ENCODE measurements at regions of chrX and their contacts with region 1.

Region 1: GRCh38 chrX:14029425-14030173 is at the start of gene GEMIN8:
- DNase-seq: peak; percentile 85 to 92 (median 90)
- ATAC-seq: peak; percentile 94 to 99 (median 98)
- H3K4me3 ChIP-seq: peak within 1 kb of the TSS; percentile 34 to 97 (median 70)
- H3K27ac ChIP-seq: peak within 1 kb of the TSS; percentile 40 to 89 (median 84)
- H3K4me1 ChIP-seq: peaks cover 0 to 30% (median 13%) of the 10 kb centered on the region in 12 donors
- H3K27me3 ChIP-seq: peaks cover 0 to 24% (median 0%) of the 10 kb centered on the region in 9 donors
- CTCF ChIP-seq: no peak
- POLR2A ChIP-seq: peak in 1 of 2 donors; percentile 53
- total RNA-seq, gene GEMIN8: 10.3 to 16.3 (median 13.5) TPM

Region 2: DNA sequence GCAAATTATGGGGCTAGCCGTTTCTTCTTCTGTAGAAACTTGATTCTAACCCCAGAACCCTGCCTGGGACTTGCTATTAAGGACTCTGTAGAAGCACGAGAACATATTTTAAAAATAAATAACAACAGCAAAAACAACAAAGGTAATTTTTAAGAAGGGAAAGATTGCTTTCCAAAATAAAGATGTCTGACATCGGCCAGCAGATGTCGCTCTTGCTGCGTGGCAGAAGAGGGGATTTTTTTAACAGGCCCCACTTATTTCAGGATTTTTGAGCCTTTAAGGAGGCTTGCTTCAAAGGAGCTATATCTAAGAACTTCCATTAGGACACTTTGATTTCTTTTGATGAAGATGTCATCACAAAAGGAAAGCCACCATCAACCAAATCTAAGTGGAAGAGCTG is 523.0 kb before region 1 on chrX:
- intact Hi-C with region 1: loop called in 9 of 10 experiments (anchors 2 to 5 kb)
- DNase-seq: peak in 4 of 5 donors; percentile 13 to 61 (median 28)
- ATAC-seq: no peak
- H3K4me3 ChIP-seq: no peak overlapping the region
- H3K27ac ChIP-seq: no peak overlapping the region
- H3K4me1 ChIP-seq: no peaks in the 10 kb centered on the region
- H3K27me3 ChIP-seq: peaks cover 0 to 34% (median 0%) of the 10 kb centered on the region in 9 donors
- CTCF ChIP-seq: peak; percentile 63 to 83 (median 74)
- POLR2A ChIP-seq: no peak

Region 3: GRCh38 chrX:13653022-13653693 is 376.4 kb before region 1 on chrX and contains the start of gene TCEANC:
- intact Hi-C with region 1: loop called in 9 of 10 experiments (anchors 2 to 5 kb)
- DNase-seq: peak; percentile 94 to 98 (median 97)
- ATAC-seq: peak; percentile 99 to 100 (median 100)
- H3K4me3 ChIP-seq: peak within 1 kb of the TSS; percentile 29 to 81 (median 64)
- H3K27ac ChIP-seq: peak within 1 kb of the TSS; percentile 73 to 98 (median 94)
- H3K4me1 ChIP-seq: peaks cover 0 to 18% (median 7%) of the 10 kb centered on the region in 12 donors
- H3K27me3 ChIP-seq: peaks cover 0 to 24% (median 0%) of the 10 kb centered on the region in 9 donors
- CTCF ChIP-seq: no peak
- POLR2A ChIP-seq: peak in 1 of 2 donors; percentile 67
- total RNA-seq, gene TCEANC: 1.9 to 6.8 (median 4.2) TPM

Region 4: GRCh38 chrX:13669246-13669737 is 360.3 kb before region 1 on chrX:
- intact Hi-C with region 1: loop called in 1 of 10 experiments (anchors 10 kb)
- DNase-seq: peak; percentile 46 to 56 (median 54)
- ATAC-seq: peak; percentile 20 to 87 (median 84)
- H3K4me3 ChIP-seq: peak overlapping the region in 1 of 12 donors; percentile 9
- H3K27ac ChIP-seq: peak overlapping the region in 9 of 12 donors; percentile 22 to 61 (median 49)
- H3K4me1 ChIP-seq: peaks cover 0 to 9% (median 0%) of the 10 kb centered on the region in 12 donors
- H3K27me3 ChIP-seq: peaks cover 0 to 4% (median 0%) of the 10 kb centered on the region in 9 donors
- CTCF ChIP-seq: no peak
- POLR2A ChIP-seq: no peak

Region 5: DNA sequence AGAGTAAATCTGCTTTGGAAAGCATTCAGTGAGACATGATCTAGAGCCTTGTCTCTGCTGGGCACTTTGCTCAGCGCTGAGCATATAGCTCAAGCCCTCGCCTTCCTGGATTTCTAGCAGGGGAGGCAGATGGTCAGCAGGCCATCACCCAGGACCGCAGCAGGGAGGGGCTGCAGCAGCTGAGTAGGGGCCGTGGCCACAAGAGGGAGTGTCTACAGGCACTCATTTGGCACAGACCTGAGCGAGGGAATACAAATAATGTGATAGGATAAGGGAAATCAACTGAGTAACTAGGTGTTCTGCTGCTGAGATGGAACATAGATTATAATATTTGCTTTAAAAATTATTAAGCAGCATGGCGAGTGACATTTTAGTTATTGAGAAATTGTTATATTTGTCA is 264.8 kb before region 1 on chrX:
- intact Hi-C with region 1: loop called in 2 of 10 experiments (anchors 5 to 10 kb)
- DNase-seq: peak in 3 of 5 donors; percentile 18 to 56 (median 28)
- ATAC-seq: peak in 3 of 4 donors; percentile 29 to 62 (median 42)
- H3K4me3 ChIP-seq: no peak overlapping the region
- H3K27ac ChIP-seq: peak overlapping the region; percentile 16 to 64 (median 51)
- H3K4me1 ChIP-seq: peaks cover 0 to 31% (median 8%) of the 10 kb centered on the region in 12 donors
- H3K27me3 ChIP-seq: peaks cover 0 to 6% (median 0%) of the 10 kb centered on the region in 9 donors
- CTCF ChIP-seq: peak in 11 of 12 donors; percentile 8 to 46 (median 21)
- POLR2A ChIP-seq: no peak

Region 6: DNA sequence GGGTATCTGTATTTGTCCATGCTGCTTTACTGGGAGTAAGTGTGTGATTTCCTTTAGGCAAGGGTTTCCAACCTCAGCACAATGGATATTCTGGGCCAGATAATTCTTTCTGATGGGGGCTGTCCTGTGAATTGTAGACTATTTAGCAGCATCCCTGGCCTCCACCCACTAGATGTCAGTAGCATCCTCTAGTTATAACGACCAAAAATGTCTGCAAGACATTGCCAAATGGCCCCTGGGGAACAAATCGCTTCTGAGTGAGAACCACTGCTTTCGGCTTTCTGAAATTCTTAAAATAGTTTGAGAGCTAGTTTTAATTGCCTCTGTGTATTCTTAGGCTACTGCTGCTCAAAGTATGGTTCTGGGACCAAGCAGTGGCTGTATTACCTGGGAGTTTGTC is 131.5 kb before region 1 on chrX:
- intact Hi-C with region 1: loop called in 4 of 10 experiments (anchors 2 to 10 kb)
- DNase-seq: peak in 4 of 5 donors; percentile 22 to 34 (median 26)
- ATAC-seq: peak in 1 of 4 donors; percentile 15
- H3K4me3 ChIP-seq: no peak overlapping the region
- H3K27ac ChIP-seq: no peak overlapping the region
- H3K4me1 ChIP-seq: no peaks in the 10 kb centered on the region
- H3K27me3 ChIP-seq: peaks cover 0 to 32% (median 0%) of the 10 kb centered on the region in 9 donors
- CTCF ChIP-seq: peak in 7 of 12 donors; percentile 11 to 33 (median 18)
- POLR2A ChIP-seq: no peak

Region 7: GRCh38 chrX:13966071-13966792 is 63.4 kb before region 1 on chrX:
- intact Hi-C with region 1: no loop called
- DNase-seq: no peak
- ATAC-seq: no peak
- H3K4me3 ChIP-seq: no peak overlapping the region
- H3K27ac ChIP-seq: no peak overlapping the region
- H3K4me1 ChIP-seq: no peaks in the 10 kb centered on the region
- H3K27me3 ChIP-seq: peaks cover 0 to 6% (median 0%) of the 10 kb centered on the region in 9 donors
- CTCF ChIP-seq: no peak
- POLR2A ChIP-seq: no peak